ENCODE measurements at regions of chr9 and their contacts with region 1.

Region 1: DNA sequence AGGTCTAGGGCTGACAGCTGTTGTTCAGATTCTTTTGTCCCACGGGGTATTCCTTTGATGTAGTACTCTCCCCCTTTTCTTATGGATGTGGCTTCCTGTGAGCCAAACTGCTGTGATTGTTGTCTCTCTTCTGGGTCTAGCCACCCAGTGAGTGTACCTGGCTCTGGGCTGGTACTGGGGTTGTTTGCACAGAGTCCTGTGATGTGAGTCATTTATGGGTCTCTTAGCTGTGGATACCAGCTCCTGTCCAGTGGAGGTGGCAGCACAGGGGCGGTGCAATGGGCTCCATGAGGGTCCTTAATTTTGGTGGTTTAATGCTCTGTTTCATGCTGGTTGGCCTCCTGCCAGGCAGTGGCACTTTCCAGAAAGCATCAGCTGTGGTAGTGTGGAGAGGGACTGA is 161.3 kb downstream of the CAVIN4 start:
- DNase-seq: no peak
- ATAC-seq: no peak
- H3K4me3 ChIP-seq: no peak overlapping the region
- H3K27ac ChIP-seq: no peak overlapping the region
- H3K4me1 ChIP-seq: no peaks in the 10 kb centered on the region
- H3K27me3 ChIP-seq: no peaks in the 10 kb centered on the region
- CTCF ChIP-seq: no peak
- POLR2A ChIP-seq: no peak
- RAD21 ChIP-seq: no peak

Region 2: DNA sequence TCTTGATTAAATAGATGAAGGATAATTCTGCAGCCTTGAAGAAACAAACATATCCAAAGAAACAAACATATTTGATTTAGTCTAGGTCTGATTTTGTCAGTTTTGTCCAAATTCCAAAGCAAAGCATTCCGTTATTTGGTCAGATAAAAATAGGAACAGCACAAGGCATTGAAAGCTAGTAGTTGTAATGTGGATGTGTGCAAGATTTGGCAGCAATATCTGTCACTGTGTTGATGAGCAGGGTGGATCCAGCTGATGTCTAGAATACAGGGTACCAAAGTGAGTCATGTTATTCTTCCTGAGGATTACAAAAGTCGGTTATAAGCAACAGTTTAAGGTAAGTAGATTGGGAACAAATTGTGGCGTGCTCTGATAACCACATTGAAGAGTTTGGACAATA is 220.0 kb after region 1 on chr9:
- CTCF ChIA-PET with region 1: no interaction called
- POLR2A ChIA-PET with region 1: interaction called, 18 read pairs
- dilution Hi-C with region 1: no loop called
- in situ Hi-C with region 1: no loop called
- intact Hi-C with region 1: no loop called
- DNase-seq: no peak
- ATAC-seq: no peak
- H3K4me3 ChIP-seq: no peak overlapping the region
- H3K27ac ChIP-seq: no peak overlapping the region
- H3K4me1 ChIP-seq: no peaks in the 10 kb centered on the region
- H3K27me3 ChIP-seq: no peaks in the 10 kb centered on the region
- CTCF ChIP-seq: no peak
- POLR2A ChIP-seq: no peak
- RAD21 ChIP-seq: no peak